PC-3 (cell line): ENCODE measurements at regions of chr2 and their contacts with region 1.

Region 1: DNA sequence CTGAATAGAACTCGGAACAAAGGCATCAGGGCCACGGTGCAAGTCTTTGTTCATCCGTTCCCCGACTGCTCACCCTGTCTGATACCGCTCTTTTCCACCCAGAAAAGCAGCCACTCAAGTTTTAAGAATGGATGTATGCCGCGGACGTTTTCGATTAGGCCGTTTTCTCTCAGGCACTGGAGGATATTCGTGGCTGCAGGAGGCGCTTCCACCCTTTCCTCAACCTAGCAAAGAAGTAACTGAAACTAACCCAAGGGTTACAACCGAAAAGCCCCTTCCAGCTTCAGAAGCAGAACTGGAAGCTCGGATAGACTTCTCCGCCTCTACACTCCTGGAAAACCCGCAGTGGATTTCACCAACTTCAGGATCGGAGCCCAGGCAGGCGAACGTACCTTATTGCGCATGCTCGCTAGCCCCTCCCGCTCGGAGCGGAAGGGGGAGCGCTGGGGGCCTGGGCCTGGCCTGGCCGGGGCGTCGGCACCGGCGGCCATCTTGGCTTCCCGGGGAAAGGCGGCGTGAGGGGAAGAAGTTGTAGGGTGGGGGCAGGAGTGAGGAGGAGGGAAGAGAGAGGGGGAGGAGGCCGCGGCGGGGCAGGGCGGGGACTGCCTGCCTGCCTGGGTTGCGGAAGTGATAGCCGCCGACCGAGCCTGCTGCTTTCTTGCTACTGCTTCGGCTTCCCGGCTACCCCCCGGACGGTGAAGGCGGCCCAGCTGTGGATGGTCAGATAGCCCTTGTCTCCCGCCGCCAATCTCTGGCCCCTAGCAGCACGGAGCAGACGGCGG is at the start of gene ACTR3:
- DNase-seq: peak; percentile 99
- ATAC-seq: peak; percentile 65
- H3K4me3 ChIP-seq: peak within 1 kb of the TSS; percentile 75
- H3K27ac ChIP-seq: peak within 1 kb of the TSS; percentile 80
- H3K4me1 ChIP-seq: peaks cover 71% of the 10 kb centered on the region
- H3K27me3 ChIP-seq: no peaks in the 10 kb centered on the region
- CTCF ChIP-seq: no peak
- total RNA-seq, gene ACTR3: 177 and 197 TPM in 2 replicates

Region 2: GRCh38 chr2:113157118-113157896 is 732.4 kb before region 1 on chr2:
- CTCF ChIA-PET with region 1: no interaction called
- POLR2A ChIA-PET with region 1: no interaction called
- intact Hi-C with region 1: loop called (anchors 5 kb)
- DNase-seq: peak; percentile 75
- ATAC-seq: peak; percentile 60
- H3K4me3 ChIP-seq: peak overlapping the region; percentile 83
- H3K27ac ChIP-seq: peak overlapping the region; percentile 90
- H3K4me1 ChIP-seq: peaks cover 30% of the 10 kb centered on the region
- H3K27me3 ChIP-seq: no peaks in the 10 kb centered on the region
- CTCF ChIP-seq: no peak

Region 3: GRCh38 chr2:113756355-113757137 is 133.1 kb before region 1 on chr2 and contains the start of gene SLC35F5:
- CTCF ChIA-PET with region 1: no interaction called
- POLR2A ChIA-PET with region 1: interaction called, 16 read pairs
- intact Hi-C with region 1: loop called (anchors 1 kb)
- DNase-seq: peak; percentile 91
- ATAC-seq: peak; percentile 91
- H3K4me3 ChIP-seq: peak within 1 kb of the TSS; percentile 69
- H3K27ac ChIP-seq: peak within 1 kb of the TSS; percentile 79
- H3K4me1 ChIP-seq: peaks cover 16% of the 10 kb centered on the region
- H3K27me3 ChIP-seq: no peaks in the 10 kb centered on the region
- CTCF ChIP-seq: no peak
- total RNA-seq, gene SLC35F5: 41.1 and 55.3 TPM in 2 replicates

Region 4: GRCh38 chr2:113806217-113806930 is 83.3 kb before region 1 on chr2:
- CTCF ChIA-PET with region 1: interaction called, 3 read pairs
- POLR2A ChIA-PET with region 1: no interaction called
- intact Hi-C with region 1: loop called (anchors 1 kb)
- DNase-seq: peak; percentile 89
- ATAC-seq: peak; percentile 98
- H3K4me3 ChIP-seq: no peak overlapping the region
- H3K27ac ChIP-seq: peak overlapping the region; percentile 50
- H3K4me1 ChIP-seq: peaks cover 12% of the 10 kb centered on the region
- H3K27me3 ChIP-seq: no peaks in the 10 kb centered on the region
- CTCF ChIP-seq: no peak

Region 5: DNA sequence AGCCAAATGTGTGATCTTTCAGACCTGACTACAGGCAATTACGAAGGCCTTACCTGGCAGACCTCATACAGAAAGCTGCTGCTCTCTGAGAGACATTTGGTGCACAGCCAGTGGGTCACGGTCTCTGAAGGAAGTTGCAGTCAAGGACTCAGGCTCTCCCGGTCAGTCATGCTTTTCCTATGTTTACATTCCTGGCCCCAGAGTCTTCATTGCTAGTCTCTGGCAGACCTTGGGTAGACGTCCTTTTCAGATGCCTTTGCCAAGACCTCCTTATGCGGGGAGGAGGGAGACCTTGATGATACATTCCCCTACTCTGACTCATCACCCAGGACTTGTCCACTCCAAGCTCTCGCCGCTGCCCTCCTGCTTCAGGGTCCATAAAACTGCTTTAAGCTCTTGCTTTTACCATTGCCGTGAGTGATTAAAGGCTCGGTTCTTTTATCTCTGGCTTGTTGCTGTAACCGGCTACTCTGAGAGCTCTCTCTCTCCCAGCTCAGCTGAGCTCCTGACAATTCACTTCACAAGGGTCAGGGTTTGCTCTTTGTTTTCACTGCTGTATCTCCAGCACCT is 71.2 kb before region 1 on chr2:
- CTCF ChIA-PET with region 1: no interaction called
- POLR2A ChIA-PET with region 1: no interaction called
- intact Hi-C with region 1: loop called (anchors 1 kb)
- DNase-seq: peak; percentile 96
- ATAC-seq: peak; percentile 95
- H3K4me3 ChIP-seq: peak overlapping the region; percentile 51
- H3K27ac ChIP-seq: peak overlapping the region; percentile 36
- H3K4me1 ChIP-seq: peaks cover 17% of the 10 kb centered on the region
- H3K27me3 ChIP-seq: no peaks in the 10 kb centered on the region
- CTCF ChIP-seq: no peak

Region 6: GRCh38 chr2:113876503-113877387 is 12.9 kb before region 1 on chr2:
- CTCF ChIA-PET with region 1: no interaction called
- POLR2A ChIA-PET with region 1: no interaction called
- intact Hi-C with region 1: loop called (anchors 1 kb)
- DNase-seq: peak; percentile 99
- ATAC-seq: peak; percentile 80
- H3K4me3 ChIP-seq: no peak overlapping the region
- H3K27ac ChIP-seq: peak overlapping the region; percentile 72
- H3K4me1 ChIP-seq: peaks cover 46% of the 10 kb centered on the region
- H3K27me3 ChIP-seq: no peaks in the 10 kb centered on the region
- CTCF ChIP-seq: no peak

Region 7: GRCh38 chr2:113965644-113966043 is 76.0 kb after region 1 on chr2:
- CTCF ChIA-PET with region 1: no interaction called
- POLR2A ChIA-PET with region 1: no interaction called
- intact Hi-C with region 1: loop called (anchors 5 kb)
- DNase-seq: peak; percentile 54
- ATAC-seq: peak; percentile 44
- H3K4me3 ChIP-seq: no peak overlapping the region
- H3K27ac ChIP-seq: no peak overlapping the region
- H3K4me1 ChIP-seq: peaks cover 19% of the 10 kb centered on the region
- H3K27me3 ChIP-seq: no peaks in the 10 kb centered on the region
- CTCF ChIP-seq: peak; percentile 74

Region 8: DNA sequence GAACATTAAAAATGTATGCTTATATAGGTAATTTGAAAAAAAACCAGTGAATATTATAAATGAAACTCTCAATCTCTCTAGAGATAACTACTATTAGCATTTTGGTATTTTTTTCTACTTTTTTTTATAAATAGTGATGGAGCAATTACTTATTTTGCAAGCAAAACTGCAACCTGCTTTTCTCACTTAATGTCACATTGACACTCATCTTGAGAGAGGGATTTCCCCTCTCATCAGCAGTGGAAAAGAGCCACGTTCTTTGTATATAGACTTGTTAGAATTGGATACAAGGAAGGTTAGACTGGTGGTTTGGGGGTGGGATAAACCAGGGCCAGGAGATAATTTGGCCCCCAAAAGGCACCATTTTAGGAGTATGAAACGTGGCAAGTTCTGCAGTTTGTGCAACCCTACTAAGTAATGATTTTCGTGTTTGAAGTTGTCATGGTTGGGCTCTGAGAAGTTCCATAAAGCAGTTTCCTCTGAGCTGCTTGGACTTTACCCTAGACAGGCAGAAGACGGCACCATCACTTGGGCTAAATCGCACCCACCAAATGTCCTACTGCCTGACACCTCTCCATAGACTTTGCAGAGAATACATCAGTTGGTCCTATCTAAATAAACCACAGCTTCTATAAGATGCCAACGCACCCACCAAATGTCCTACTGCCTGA is 194.2 kb after region 1 on chr2:
- CTCF ChIA-PET with region 1: no interaction called
- POLR2A ChIA-PET with region 1: no interaction called
- intact Hi-C with region 1: no loop called
- DNase-seq: no peak
- ATAC-seq: no peak
- H3K4me3 ChIP-seq: no peak overlapping the region
- H3K27ac ChIP-seq: no peak overlapping the region
- H3K4me1 ChIP-seq: no peaks in the 10 kb centered on the region
- H3K27me3 ChIP-seq: peaks cover 42% of the 10 kb centered on the region
- CTCF ChIP-seq: no peak